B cell (primary cell): ENCODE measurements at regions of chr5 and their contacts with region 1.

Region 1: GRCh38 chr5:181260387-181261319 is at the start of gene TRIM52:
- DNase-seq: peak; percentile 94
- ATAC-seq: peak; percentile 79
- H3K4me3 ChIP-seq: peak within 1 kb of the TSS; percentile 67 to 99 (median 98)
- H3K4me3 Mint-ChIP-seq: peak within 1 kb of the TSS; percentile 95
- H3K27ac ChIP-seq: peak within 1 kb of the TSS; percentile 98
- H3K27ac Mint-ChIP-seq: peak within 1 kb of the TSS; percentile 97
- H3K4me1 ChIP-seq: peaks cover 22 to 38% of the 10 kb centered on the region in 2 donors
- H3K4me1 Mint-ChIP-seq: peaks cover 53% of the 10 kb centered on the region
- H3K27me3 ChIP-seq: no peaks in the 10 kb centered on the region
- H3K27me3 Mint-ChIP-seq: no peaks in the 10 kb centered on the region
- CTCF ChIP-seq: peak; percentile 17
- total RNA-seq, gene TRIM52: 58.6 and 61.3 TPM in 2 replicates

Region 2: GRCh38 chr5:180802325-180803180 is 458.1 kb before region 1 on chr5 and contains the start of gene MGAT1:
- CTCF ChIA-PET with region 1: interaction called, 3 read pairs
- POLR2A ChIA-PET with region 1: interaction called, 3 read pairs
- intact Hi-C with region 1: loop called (anchors 5 kb)
- DNase-seq: peak; percentile 82
- ATAC-seq: peak; percentile 65
- H3K4me3 ChIP-seq: peak within 1 kb of the TSS; percentile 82 to 96 (median 90)
- H3K4me3 Mint-ChIP-seq: peak within 1 kb of the TSS; percentile 96
- H3K27ac ChIP-seq: peak within 1 kb of the TSS; percentile 81 to 90
- H3K27ac Mint-ChIP-seq: peak within 1 kb of the TSS; percentile 87
- H3K4me1 ChIP-seq: peaks cover 80 to 83% of the 10 kb centered on the region in 2 donors
- H3K4me1 Mint-ChIP-seq: peaks cover 84% of the 10 kb centered on the region
- H3K27me3 ChIP-seq: no peaks in the 10 kb centered on the region
- H3K27me3 Mint-ChIP-seq: no peaks in the 10 kb centered on the region
- CTCF ChIP-seq: no peak
- total RNA-seq, gene MGAT1: 140 and 144 TPM in 2 replicates

Region 3: DNA sequence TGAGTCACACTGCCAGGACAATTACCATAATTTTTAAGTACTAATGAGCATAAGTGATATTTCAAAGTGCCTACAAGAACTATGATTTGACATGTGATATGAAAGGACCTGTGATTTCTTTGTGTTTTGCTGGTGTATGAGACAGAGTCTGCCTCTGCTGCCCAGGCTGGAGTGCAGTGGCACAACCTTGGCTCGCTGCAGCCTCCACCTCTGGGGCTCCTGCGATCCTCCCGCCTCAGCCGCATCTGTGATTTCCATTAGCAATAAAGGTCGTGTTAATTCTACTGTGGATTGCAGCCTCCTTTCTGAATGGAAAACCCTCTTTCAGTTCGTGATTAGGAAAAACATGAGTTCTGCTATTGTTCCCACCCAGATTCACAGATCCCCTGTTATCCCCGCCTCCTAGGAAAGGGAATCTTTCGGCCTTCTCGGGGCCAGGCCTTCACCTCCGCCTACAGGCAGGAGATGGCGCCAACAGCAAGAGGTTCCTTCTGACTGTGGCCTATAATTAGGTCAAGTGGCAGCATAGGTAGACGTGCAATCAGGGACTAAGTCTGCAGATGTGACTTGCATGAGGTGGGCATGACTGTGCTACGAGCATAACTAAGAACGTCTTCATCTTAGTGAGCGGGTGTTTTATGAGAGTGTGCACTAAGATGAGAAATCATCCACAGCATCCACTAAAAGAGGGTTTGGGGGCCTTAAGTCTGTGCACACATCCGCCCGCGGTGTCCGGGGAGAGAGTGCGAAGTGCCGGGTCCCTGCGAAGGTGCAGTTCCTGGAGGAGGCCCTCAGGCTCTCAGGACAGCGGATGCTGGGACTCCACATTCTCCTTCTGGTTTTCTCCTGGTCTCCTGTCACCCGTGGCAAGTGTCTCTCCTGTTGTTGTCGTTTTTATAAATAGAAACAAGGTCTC is 78.7 kb before region 1 on chr5:
- CTCF ChIA-PET with region 1: interaction called, 14 read pairs
- POLR2A ChIA-PET with region 1: interaction called, 17 read pairs
- intact Hi-C with region 1: loop called (anchors 1 kb)
- DNase-seq: peak; percentile 85
- ATAC-seq: peak; percentile 74
- H3K4me3 ChIP-seq: no peak overlapping the region
- H3K4me3 Mint-ChIP-seq: peak overlapping the region; percentile 71
- H3K27ac ChIP-seq: no peak overlapping the region
- H3K27ac Mint-ChIP-seq: peak overlapping the region; percentile 70
- H3K4me1 ChIP-seq: peaks cover 8 to 33% of the 10 kb centered on the region in 2 donors
- H3K4me1 Mint-ChIP-seq: peaks cover 31% of the 10 kb centered on the region
- H3K27me3 ChIP-seq: no peaks in the 10 kb centered on the region
- H3K27me3 Mint-ChIP-seq: no peaks in the 10 kb centered on the region
- CTCF ChIP-seq: peak; percentile 81

Region 4: DNA sequence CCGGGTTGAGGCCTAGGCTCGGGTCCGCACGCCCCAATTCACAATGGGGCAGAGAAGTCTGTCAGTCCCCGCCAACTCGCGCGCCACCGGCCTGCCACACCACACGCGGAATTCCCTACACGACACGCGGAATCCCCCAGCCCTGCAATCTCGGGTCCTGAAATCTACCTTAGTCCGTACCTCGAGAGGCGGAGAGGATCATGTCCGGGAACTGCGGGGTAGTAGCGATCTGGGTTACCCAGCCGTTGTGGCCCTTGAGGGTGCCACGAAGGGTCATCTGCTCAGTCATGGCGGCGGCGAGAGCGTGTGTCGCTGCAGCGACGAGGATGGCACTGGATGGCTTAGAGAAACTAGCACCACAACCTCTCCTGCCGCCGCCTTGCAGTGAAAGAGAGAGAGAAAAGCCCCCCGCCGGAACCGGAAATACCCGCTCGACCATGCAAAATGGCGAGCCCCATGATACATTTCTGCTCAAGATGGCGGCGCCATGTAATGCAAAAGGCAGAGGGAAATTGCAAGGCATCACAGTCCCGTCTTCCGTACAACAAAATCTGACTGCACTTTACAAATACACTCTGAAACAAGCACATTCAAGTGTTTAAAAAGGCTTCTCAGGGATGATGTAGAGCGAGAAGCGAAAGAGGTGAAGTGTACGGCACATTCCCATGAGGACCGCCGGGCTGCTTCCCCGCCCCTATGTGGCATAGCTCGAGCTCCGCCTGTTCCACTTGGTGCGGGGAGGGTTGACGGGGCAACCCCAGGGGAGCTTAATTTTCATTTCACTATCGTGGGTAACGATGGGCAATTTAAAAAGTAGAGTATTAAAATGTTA is 16.9 kb before region 1 on chr5 and contains the start of gene RACK1:
- CTCF ChIA-PET with region 1: interaction called, 6 read pairs
- POLR2A ChIA-PET with region 1: interaction called, 63 read pairs
- intact Hi-C with region 1: loop called (anchors 1 kb)
- DNase-seq: peak; percentile 96
- ATAC-seq: peak; percentile 75
- H3K4me3 ChIP-seq: peak within 1 kb of the TSS; percentile 70 to 99 (median 98)
- H3K4me3 Mint-ChIP-seq: peak within 1 kb of the TSS; percentile 99
- H3K27ac ChIP-seq: peak within 1 kb of the TSS; percentile 91 to 92
- H3K27ac Mint-ChIP-seq: peak within 1 kb of the TSS; percentile 96
- H3K4me1 ChIP-seq: peaks cover 44 to 58% of the 10 kb centered on the region in 2 donors
- H3K4me1 Mint-ChIP-seq: peaks cover 66% of the 10 kb centered on the region
- H3K27me3 ChIP-seq: no peaks in the 10 kb centered on the region
- H3K27me3 Mint-ChIP-seq: no peaks in the 10 kb centered on the region
- CTCF ChIP-seq: no peak
- total RNA-seq, gene RACK1: 1,928 and 2,047 TPM in 2 replicates

Region 5: DNA sequence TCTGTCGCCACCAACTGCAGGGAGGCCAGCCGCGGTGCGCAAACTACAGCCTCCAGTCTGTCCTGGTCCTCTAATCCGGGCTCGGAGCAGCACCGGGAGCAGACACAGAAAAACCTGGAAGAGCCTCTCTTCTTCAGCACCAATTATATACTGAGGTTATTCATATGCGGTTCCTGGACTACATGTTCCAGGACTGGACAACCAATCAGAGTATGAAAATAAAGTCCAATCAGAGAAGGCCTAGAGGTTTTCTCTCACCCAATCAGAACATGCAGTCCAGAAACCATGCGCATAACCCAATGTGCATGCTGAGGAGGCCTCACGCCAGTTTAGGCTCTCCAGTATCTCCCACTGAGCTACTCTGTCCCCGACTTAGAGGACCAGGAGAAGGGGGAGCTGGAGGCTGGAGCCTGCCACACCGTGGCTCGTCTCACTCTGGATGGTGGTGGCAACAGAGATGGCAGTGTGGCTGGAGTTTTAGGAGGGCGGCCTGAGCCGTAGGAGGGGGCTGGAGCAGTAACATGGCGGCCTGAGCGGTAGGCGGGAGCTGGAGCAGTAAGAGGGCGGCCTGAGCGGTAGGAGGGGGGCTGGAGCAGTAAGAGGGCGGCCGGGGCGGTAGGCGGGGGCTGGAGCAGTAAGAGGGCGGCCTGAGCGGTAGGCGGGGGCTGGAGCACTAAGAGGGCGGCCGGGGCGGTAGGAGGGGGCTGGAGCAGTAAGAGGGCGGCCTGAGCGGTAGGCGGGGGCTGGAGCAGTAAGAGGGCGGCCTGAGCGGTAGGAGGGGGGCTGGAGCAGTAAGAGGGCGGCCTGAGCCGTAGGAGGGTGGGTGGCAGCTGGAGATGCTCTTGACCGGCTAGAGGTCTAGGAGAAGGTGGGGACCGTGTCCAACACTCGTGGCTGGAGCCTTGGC is 20.7 kb after region 1 on chr5:
- CTCF ChIA-PET with region 1: no interaction called
- POLR2A ChIA-PET with region 1: no interaction called
- intact Hi-C with region 1: loop called (anchors 1 kb)
- DNase-seq: peak; percentile 2
- ATAC-seq: no peak
- H3K4me3 ChIP-seq: no peak overlapping the region
- H3K4me3 Mint-ChIP-seq: no peak overlapping the region
- H3K27ac ChIP-seq: no peak overlapping the region
- H3K27ac Mint-ChIP-seq: no peak overlapping the region
- H3K4me1 ChIP-seq: peaks cover under 1% of the 10 kb centered on the region in 2 donors
- H3K4me1 Mint-ChIP-seq: peaks cover 4% of the 10 kb centered on the region
- H3K27me3 ChIP-seq: no peaks in the 10 kb centered on the region
- H3K27me3 Mint-ChIP-seq: peaks cover 4% of the 10 kb centered on the region
- CTCF ChIP-seq: no peak